Activated CD4-positive, alpha-beta memory T cell treated with anti-CD3 and anti-CD28 coated beads for 36 hours (primary cell): ENCODE measurements at regions of chr2 and their contacts with region 1.

Region 1: DNA sequence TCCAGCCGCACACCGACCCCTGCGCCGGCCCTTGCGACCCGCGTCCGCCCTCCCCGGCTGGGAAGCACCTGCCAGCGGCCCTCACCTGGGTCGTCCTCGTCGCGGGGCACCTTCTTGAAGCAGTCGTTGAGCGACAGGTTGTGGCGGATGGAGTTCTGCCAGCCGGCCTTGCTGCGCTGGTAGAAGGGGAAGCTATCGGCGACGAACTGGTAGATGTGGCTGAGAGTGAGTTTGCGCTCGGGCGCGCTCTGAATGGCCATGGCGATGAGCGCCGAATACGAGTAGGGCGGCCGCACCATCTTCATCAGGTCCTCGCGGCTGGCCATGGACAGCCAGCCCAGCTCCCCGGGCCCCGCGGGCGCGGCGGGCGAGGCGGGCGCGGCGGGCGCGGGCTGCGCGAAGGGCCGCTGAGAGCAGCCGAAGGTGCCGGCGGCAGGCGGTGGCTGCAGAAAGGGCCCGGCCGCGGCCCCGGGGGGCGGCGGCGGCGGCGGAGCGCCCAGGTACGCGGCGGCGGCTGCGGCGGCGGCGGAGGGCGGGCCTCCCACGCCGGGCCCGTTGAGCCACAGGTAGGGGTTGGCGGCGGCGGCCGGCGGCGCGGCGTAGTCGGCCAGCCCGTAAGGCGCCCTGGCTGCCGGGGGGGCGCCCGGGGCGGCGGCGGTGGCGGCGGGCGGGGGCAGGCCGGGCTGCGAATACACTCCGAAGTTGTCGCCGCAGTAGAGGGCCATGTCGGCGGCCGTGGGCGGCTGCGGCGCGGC is 505 bp downstream of the FOXI3 start:
- DNase-seq: peak; percentile 28
- H3K4me3 Mint-ChIP-seq: peak overlapping the region; percentile 35
- H3K27ac Mint-ChIP-seq: no peak overlapping the region
- H3K4me1 Mint-ChIP-seq: peaks cover 11% of the 10 kb centered on the region
- H3K27me3 Mint-ChIP-seq: peaks cover 46% of the 10 kb centered on the region

Region 2: DNA sequence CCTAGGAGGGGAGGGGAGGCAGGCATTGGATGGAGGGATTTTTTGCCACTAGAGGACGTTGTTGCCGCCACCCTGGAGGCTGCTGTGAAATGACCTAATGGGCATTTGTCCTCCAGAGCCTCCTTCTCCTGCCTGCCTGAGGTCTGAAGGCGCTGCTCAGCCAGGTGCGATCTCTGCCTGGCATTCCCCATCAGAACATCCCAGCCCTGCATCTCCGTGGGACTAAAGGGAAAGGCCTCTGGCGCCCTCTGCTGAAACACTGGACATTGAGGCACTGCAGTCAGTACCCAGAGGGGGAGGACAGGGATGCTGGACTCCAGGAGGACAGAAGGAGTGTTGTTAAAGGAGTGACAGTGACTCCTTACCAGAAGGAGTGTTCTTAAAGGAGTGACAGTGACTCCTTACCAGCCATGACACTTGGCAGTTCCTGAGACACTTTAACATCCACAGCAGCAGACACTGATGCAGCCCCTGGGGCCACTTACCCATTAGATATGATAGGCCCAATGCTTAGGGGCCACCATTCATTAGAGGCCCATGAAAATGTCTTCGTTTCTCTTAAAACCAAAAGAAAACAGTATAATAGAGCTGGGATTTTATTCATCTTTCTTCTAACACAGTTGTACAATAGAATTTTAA is 264.8 kb before region 1 on chr2:
- CTCF ChIA-PET with region 1: interaction called, 4 read pairs
- POLR2A ChIA-PET with region 1: no interaction called
- intact Hi-C with region 1: loop called (anchors 5 kb)
- DNase-seq: peak; percentile 61
- H3K4me3 Mint-ChIP-seq: no peak overlapping the region
- H3K27ac Mint-ChIP-seq: no peak overlapping the region
- H3K4me1 Mint-ChIP-seq: peaks cover 1% of the 10 kb centered on the region
- H3K27me3 Mint-ChIP-seq: peaks cover 11% of the 10 kb centered on the region

Region 3: GRCh38 chr2:88350331-88351248 is 101.4 kb before region 1 on chr2:
- CTCF ChIA-PET with region 1: no interaction called
- POLR2A ChIA-PET with region 1: no interaction called
- intact Hi-C with region 1: loop called (anchors 10 kb)
- DNase-seq: peak; percentile 82
- H3K4me3 Mint-ChIP-seq: peak overlapping the region; percentile 55
- H3K27ac Mint-ChIP-seq: no peak overlapping the region
- H3K4me1 Mint-ChIP-seq: peaks cover 2% of the 10 kb centered on the region
- H3K27me3 Mint-ChIP-seq: peaks cover 15% of the 10 kb centered on the region

Region 4: GRCh38 chr2:88472811-88473210 is 20.8 kb after region 1 on chr2:
- CTCF ChIA-PET with region 1: no interaction called
- POLR2A ChIA-PET with region 1: no interaction called
- intact Hi-C with region 1: no loop called
- DNase-seq: no peak
- H3K4me3 Mint-ChIP-seq: no peak overlapping the region
- H3K27ac Mint-ChIP-seq: no peak overlapping the region
- H3K4me1 Mint-ChIP-seq: no peaks in the 10 kb centered on the region
- H3K27me3 Mint-ChIP-seq: peaks cover 8% of the 10 kb centered on the region